ENCODE measurements at regions of chr3 and their contacts with region 1.

Region 1: GRCh38 chr3:187738331-187739093 is 6.8 kb downstream of the BCL6 start:
- DNase-seq: peak; percentile 95 to 96
- H3K4me3 ChIP-seq: peak overlapping the region in 2 of 3 donors; percentile 6 to 42
- H3K27ac ChIP-seq: peak overlapping the region; percentile 90 to 100 (median 97)
- H3K4me1 ChIP-seq: peaks cover 32 to 41% of the 10 kb centered on the region in 2 donors
- H3K27me3 ChIP-seq: no peaks in the 10 kb centered on the region
- CTCF ChIP-seq: peak; percentile 44 to 94 (median 72)
- POLR2A ChIP-seq: peak in 1 of 2 donors; percentile 82

Region 2: GRCh38 chr3:188954590-188955208 is 1216.2 kb after region 1 on chr3:
- intact Hi-C with region 1: loop called (anchors 5 kb)
- DNase-seq: peak; percentile 82 to 92
- H3K4me3 ChIP-seq: no peak overlapping the region
- H3K27ac ChIP-seq: no peak overlapping the region
- H3K4me1 ChIP-seq: peaks cover 7 to 27% of the 10 kb centered on the region in 2 donors
- H3K27me3 ChIP-seq: no peaks in the 10 kb centered on the region
- CTCF ChIP-seq: peak; percentile 76 to 98 (median 94)
- POLR2A ChIP-seq: no peak

Region 3: GRCh38 chr3:189041482-189042090 is 1303.1 kb after region 1 on chr3:
- intact Hi-C with region 1: loop called (anchors 10 kb)
- DNase-seq: peak; percentile 52 to 74
- H3K4me3 ChIP-seq: no peak overlapping the region
- H3K27ac ChIP-seq: no peak overlapping the region
- H3K4me1 ChIP-seq: no peaks in the 10 kb centered on the region
- H3K27me3 ChIP-seq: no peaks in the 10 kb centered on the region
- CTCF ChIP-seq: peak in 4 of 6 experiments; percentile 30 to 55 (median 50)
- POLR2A ChIP-seq: no peak

Region 4: DNA sequence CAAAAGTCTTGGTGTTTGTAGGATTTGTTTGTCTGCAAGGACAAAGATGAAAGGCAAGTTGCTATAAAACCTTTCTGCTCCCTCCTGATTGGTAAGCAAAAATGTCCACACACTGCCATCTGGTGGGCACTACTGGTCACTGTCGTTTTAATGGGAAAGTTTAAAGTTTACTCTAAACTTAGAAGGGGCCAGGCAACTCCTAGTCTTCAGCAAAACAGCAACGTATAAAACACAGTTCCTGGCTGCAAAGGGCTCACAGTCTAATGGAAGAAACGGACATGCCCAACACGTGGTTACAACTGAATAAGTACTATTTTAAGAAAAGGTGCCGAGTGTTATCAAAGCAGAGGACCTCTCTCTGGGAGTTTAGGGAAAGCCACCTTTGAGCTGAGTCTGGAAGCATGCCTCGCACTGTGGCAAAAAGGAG is 1409.6 kb after region 1 on chr3:
- intact Hi-C with region 1: loop called (anchors 5 kb)
- DNase-seq: peak; percentile 67 to 77
- H3K4me3 ChIP-seq: no peak overlapping the region
- H3K27ac ChIP-seq: peak overlapping the region in 2 of 3 donors; percentile 29 to 49
- H3K4me1 ChIP-seq: peaks cover 7 to 13% of the 10 kb centered on the region in 2 donors
- H3K27me3 ChIP-seq: no peaks in the 10 kb centered on the region
- CTCF ChIP-seq: peak; percentile 40 to 89 (median 81)
- POLR2A ChIP-seq: no peak

Measured in thyroid gland (tissue), 4 donors.